ENCODE measurements at regions of chr1 and their contacts with region 1.

Region 1: GRCh38 chr1:24635195-24635843 is 7.8 kb upstream of the SRRM1 start:
- DNase-seq: no peak
- ATAC-seq: no peak
- H3K4me3 ChIP-seq: no peak overlapping the region
- H3K27ac ChIP-seq: no peak overlapping the region
- H3K4me1 ChIP-seq: no peaks in the 10 kb centered on the region
- H3K27me3 ChIP-seq: no peaks in the 10 kb centered on the region

Region 2: DNA sequence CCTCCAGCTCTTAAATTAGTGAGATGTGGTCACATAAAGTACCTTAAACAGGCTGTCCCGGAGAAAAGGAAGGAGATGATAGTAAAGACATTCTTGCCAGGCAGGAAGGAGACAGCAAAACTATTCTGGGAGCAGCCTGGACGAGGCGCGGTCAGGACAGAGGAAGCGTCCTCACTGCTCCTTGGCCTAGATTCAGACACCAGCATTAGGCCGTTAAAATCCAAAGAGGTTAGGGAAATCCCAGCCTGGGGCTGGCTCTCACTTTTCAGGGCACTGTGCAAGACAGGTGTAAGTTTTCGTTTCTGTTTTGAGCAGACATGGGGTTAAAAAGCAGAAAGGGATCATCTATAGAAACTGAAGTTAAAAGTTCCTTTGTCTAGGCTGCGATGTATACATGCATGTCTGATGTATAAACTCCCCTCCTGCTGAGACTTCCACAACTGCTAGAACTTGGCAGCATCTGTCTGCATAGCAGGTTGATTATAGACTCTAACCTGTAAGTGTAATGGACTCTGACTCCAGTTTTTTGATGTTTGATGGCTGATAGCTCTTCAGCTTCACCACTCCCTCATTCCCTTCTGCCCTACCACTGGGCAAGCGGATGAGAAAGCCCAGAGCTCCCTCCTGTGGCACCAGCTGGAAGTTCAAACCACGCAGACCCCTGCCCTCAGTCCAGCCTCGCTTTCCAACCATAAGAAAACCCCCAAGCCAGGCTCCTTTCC is 243.3 kb before region 1 on chr1:
- intact Hi-C with region 1: loop called in 1 of 2 experiments (anchors 10 kb)
- DNase-seq: peak in 1 of 2 donors; percentile 71
- ATAC-seq: peak; percentile 86
- H3K4me3 ChIP-seq: no peak overlapping the region
- H3K27ac ChIP-seq: no peak overlapping the region
- H3K4me1 ChIP-seq: no peaks in the 10 kb centered on the region
- H3K27me3 ChIP-seq: no peaks in the 10 kb centered on the region

Measured in aorta (tissue), 5 donors.